MCF 10A (cell line): ENCODE measurements at regions of chr1 and their contacts with region 1.

Region 1: GRCh38 chr1:47569681-47570470 is 132.0 kb downstream of the FOXD2 start:
- DNase-seq: peak; percentile 86
- H3K4me3 Mint-ChIP-seq: peak overlapping the region; percentile 58
- H3K27ac Mint-ChIP-seq: peak overlapping the region; percentile 92
- H3K4me1 Mint-ChIP-seq: peaks cover 11% of the 10 kb centered on the region
- H3K27me3 Mint-ChIP-seq: no peaks in the 10 kb centered on the region
- CTCF ChIP-seq: peak; percentile 33

Region 2: GRCh38 chr1:47478090-47478489 is 91.8 kb before region 1 on chr1:
- CTCF ChIA-PET with region 1: interaction called, 17 read pairs
- POLR2A ChIA-PET with region 1: interaction called, 6 read pairs
- intact Hi-C with region 1: no loop called
- DNase-seq: peak; percentile 42
- H3K4me3 Mint-ChIP-seq: peak overlapping the region; percentile 38
- H3K27ac Mint-ChIP-seq: peak overlapping the region; percentile 73
- H3K4me1 Mint-ChIP-seq: peaks cover 37% of the 10 kb centered on the region
- H3K27me3 Mint-ChIP-seq: no peaks in the 10 kb centered on the region
- CTCF ChIP-seq: no peak

Region 3: DNA sequence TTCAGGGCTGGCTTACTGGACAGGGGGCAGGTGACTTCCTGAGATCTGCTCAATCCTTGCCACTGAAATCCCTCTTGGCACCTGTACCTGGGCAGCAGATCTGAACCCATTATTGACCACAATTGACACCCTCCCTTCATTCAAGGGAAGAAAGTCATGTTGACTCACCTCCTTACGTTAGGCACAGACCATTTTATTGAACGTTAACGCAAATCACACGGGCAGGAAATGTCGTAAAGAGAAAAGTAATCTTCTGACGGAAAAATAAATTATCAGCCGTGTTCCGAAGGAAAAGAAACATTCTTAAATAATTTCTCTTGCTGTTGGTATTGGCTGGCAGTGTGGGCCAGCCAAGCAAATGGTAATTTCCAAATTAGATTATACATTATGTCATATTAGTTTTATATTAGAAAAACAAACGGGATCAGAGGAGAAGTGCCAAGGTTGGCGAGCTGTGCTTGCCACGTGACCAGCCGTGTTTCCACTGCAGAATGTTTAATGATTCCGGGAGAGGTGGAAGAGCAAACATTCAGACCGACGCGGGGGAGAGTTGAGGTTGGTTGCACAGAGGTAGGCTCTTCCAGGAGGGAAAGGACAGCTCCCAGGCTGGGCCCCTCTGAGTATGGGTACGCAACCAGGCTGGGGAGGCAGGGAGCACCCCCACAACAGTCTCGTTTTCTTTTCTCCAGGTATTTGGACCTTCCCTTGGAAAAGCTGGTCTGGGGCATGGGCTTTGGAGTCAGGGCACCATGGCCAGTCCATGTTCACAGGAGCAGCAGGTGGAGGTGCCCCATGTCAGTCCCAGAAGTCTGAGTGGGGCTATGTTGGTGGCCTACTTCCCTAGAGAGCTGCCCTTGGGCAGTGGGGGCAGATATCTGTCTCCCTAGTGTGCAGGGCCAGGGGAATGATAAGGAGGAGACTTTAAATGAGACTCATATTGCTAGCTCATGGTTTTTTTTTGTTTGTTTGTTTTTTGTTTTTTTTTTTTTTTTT is 11.0 kb before region 1 on chr1:
- CTCF ChIA-PET with region 1: interaction called, 29 read pairs
- POLR2A ChIA-PET with region 1: interaction called, 5 read pairs
- intact Hi-C with region 1: no loop called
- DNase-seq: no peak
- H3K4me3 Mint-ChIP-seq: no peak overlapping the region
- H3K27ac Mint-ChIP-seq: no peak overlapping the region
- H3K4me1 Mint-ChIP-seq: peaks cover 21% of the 10 kb centered on the region
- H3K27me3 Mint-ChIP-seq: no peaks in the 10 kb centered on the region
- CTCF ChIP-seq: no peak

Region 4: DNA sequence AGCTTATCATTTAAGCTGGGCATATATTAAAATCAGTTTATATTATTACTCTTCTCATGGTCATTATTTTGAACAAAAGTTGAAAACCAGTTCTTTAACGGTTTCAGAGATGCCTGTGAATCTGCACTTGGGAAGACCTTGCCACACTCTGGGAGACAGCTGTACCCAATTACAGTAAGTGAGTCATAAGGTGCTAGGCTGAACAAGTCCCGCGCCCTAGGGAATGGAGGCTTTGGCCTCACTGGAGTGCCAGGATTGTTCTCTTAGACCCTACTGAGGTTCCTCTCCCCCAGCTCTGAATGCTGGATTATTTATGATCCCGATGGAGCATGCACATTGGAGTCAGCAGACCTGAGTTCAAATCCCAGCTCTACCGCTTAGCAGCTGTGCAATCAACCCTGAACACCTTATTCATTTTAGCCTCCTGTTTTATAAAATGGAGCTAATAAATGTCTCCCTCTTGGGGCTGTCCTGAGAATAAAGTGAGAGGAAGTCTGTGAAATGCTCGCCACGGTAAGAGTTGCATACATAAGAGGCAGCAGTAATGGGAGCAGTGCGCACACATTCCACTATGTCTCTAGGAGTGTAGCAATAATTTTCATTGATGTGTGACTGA is 134.2 kb after region 1 on chr1:
- CTCF ChIA-PET with region 1: interaction called, 14 read pairs
- POLR2A ChIA-PET with region 1: interaction called, 3 read pairs
- intact Hi-C with region 1: no loop called
- DNase-seq: peak; percentile 66
- H3K4me3 Mint-ChIP-seq: no peak overlapping the region
- H3K27ac Mint-ChIP-seq: no peak overlapping the region
- H3K4me1 Mint-ChIP-seq: no peaks in the 10 kb centered on the region
- H3K27me3 Mint-ChIP-seq: peaks cover 15% of the 10 kb centered on the region
- CTCF ChIP-seq: peak; percentile 21